ENCODE measurements at regions of chrX and their contacts with region 1.

Region 1: DNA sequence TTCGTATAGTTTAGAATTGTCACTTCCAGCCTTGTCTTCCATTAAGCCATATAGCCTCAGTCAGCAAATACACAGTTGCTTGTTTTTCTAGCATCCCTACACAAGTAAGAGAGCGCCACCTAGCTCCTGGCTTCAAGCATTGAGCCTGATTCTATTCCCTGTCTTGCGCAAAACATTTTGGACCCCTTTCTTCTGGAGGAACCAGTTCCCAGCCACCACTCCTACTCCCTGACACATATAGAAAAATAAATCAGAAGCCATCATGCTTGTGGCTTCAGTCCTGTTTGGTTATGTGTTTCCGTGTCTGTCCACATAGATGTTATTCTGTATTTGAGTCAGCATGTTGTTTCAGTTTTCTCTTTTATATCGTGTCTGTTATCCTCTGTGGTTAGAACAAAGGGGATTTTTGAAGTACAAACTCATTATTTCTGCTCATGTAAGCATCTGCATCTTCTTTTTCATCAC is 59.9 kb downstream of the GK start:
- DNase-seq: peak; percentile 40
- ATAC-seq: peak; percentile 71
- H3K4me3 ChIP-seq: no peak overlapping the region
- H3K27ac ChIP-seq: no peak overlapping the region
- H3K4me1 ChIP-seq: no peaks in the 10 kb centered on the region
- H3K27me3 ChIP-seq: no peaks in the 10 kb centered on the region
- CTCF ChIP-seq: peak; percentile 53
- EP300 ChIP-seq: no peak
- POLR2A ChIP-seq: no peak
- RAD21 ChIP-seq: peak; percentile 29; the same call in 1 of the 2 replicates

Region 2: DNA sequence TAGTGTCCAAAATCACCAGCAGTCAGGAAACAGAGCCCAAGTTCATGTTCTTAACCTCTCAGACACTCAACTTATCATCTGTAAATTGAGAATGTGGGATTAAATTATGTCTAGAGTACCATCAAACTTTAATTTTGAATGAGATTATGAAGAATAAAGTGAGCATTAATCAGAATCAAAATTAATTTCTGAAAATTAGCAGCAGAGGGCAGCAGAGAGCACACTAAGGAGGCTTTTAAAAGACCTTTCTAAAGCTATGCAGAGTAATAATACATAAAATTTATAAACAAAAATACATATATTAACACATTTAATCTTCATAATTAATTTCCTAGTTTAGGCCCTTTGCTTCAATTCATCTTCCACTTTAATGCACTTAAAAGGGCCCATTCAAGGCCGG is 142.6 kb before region 1 on chrX:
- CTCF ChIA-PET with region 1: interaction called, 10 read pairs
- POLR2A ChIA-PET with region 1: no interaction called
- in situ Hi-C with region 1: no loop called
- intact Hi-C with region 1: loop called (anchors 1 kb)
- DNase-seq: peak; percentile 2
- ATAC-seq: no peak
- H3K4me3 ChIP-seq: no peak overlapping the region
- H3K27ac ChIP-seq: no peak overlapping the region
- H3K4me1 ChIP-seq: peaks cover 26% of the 10 kb centered on the region
- H3K27me3 ChIP-seq: no peaks in the 10 kb centered on the region
- CTCF ChIP-seq: peak; percentile 36; the same call in 1 of the 2 replicates
- EP300 ChIP-seq: no peak
- POLR2A ChIP-seq: no peak
- RAD21 ChIP-seq: no peak

Region 3: GRCh38 chrX:30635630-30636029 is 77.5 kb before region 1 on chrX:
- CTCF ChIA-PET with region 1: interaction called, 5 read pairs
- POLR2A ChIA-PET with region 1: no interaction called
- in situ Hi-C with region 1: loop called (anchors 10 kb)
- intact Hi-C with region 1: loop called (anchors 1 kb)
- DNase-seq: no peak
- ATAC-seq: no peak
- H3K4me3 ChIP-seq: no peak overlapping the region
- H3K27ac ChIP-seq: no peak overlapping the region
- H3K4me1 ChIP-seq: peaks cover 29% of the 10 kb centered on the region
- H3K27me3 ChIP-seq: no peaks in the 10 kb centered on the region
- CTCF ChIP-seq: 0 out of 2 replicates have a peak, but pooled peaks have one; percentile 26
- EP300 ChIP-seq: no peak
- POLR2A ChIP-seq: no peak
- RAD21 ChIP-seq: peak; percentile 24; the same call in 1 of the 2 replicates

Measured in HepG2 (cell line).